ENCODE measurements at regions of chr13 and their contacts with region 1.

Region 1: DNA sequence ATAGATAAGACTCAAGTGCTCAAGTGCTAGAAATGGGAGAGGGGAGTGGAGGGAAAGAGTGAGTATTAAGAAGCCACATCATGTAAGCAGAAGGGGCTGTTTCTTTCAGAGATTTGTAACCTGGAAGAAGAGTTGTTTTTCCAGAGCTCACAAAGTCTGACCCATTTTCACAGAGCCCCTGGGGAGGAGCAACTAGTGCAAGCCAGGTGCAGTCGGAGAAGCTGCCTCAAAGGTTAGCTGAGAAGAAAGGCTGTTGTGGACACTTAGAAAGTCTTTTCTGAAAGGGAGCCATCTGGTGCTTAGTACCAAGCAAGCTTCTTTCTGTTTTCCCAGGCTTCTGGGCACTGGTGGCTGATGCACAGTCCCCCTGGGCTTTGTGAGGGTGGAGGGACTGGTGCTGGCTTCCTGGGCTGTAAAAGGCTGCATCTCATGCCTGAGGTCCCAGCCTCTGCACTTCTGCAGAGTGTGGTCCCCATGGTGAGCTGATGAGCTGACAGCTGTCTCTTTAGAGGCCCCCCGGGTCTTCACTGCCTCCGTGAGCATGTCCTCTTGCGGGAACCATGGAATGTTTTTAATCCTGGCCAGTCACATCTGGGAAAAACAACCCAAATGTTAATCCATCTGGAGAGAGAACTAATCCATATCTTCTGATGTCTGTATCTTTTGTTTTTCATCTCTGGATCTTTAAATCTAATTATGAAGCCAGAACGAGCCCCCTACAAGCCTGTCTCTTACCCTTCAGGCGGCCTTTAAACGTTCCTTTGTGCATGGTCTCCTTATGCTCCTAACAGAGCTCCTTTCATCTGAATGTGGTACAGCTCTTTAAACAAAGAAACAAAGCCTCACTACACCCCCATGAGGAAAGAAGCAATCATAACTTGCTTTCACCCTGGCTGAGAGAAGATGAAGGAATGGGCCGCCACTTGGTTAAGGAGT is 40.2 kb downstream of the OLFM4 start:
- DNase-seq: peak; percentile 79

Region 2: DNA sequence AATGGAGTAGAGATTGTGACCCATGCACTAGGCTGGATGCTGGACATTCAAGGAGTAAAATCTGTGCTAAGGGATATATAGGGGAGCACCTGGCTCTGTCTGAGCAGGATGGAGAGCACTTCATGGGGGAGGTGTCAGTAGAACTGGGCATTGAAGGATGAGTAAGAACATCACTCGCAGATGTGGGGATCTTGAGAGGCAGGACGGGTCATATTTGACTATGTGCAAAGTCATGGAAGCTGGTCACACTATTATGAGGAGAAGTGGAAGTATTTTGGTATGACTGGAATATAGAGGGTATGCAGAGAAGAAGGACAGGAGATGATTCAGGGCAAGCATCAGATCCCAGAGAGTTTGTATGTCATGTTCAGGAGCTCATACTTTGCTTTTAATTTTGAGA is 157.5 kb before region 1 on chr13:
- in situ Hi-C with region 1: loop called (anchors 10 kb)
- DNase-seq: no peak

Measured in SK-MEL-5 (cell line).